ENCODE measurements at regions of chr3 and their contacts with region 1.

Region 1: GRCh38 chr3:66816090-66816761 is 181.9 kb upstream of the KBTBD8 start:
- DNase-seq: peak; percentile 13
- H3K4me3 ChIP-seq: no peak overlapping the region
- H3K27ac ChIP-seq: no peak overlapping the region
- H3K4me1 ChIP-seq: no peaks in the 10 kb centered on the region
- H3K27me3 ChIP-seq: no peaks in the 10 kb centered on the region
- CTCF ChIP-seq: peak; percentile 19 to 57

Region 2: GRCh38 chr3:66638717-66639116 is 177.5 kb before region 1 on chr3:
- CTCF ChIA-PET with region 1: interaction called, 4 read pairs
- dilution Hi-C with region 1: no loop called
- in situ Hi-C with region 1: no loop called
- intact Hi-C with region 1: loop called (anchors 1 kb)
- DNase-seq: peak; percentile 16
- H3K4me3 ChIP-seq: no peak overlapping the region
- H3K27ac ChIP-seq: no peak overlapping the region
- H3K4me1 ChIP-seq: no peaks in the 10 kb centered on the region
- H3K27me3 ChIP-seq: no peaks in the 10 kb centered on the region
- CTCF ChIP-seq: peak in 1 of 2 donors; percentile 45

Region 3: DNA sequence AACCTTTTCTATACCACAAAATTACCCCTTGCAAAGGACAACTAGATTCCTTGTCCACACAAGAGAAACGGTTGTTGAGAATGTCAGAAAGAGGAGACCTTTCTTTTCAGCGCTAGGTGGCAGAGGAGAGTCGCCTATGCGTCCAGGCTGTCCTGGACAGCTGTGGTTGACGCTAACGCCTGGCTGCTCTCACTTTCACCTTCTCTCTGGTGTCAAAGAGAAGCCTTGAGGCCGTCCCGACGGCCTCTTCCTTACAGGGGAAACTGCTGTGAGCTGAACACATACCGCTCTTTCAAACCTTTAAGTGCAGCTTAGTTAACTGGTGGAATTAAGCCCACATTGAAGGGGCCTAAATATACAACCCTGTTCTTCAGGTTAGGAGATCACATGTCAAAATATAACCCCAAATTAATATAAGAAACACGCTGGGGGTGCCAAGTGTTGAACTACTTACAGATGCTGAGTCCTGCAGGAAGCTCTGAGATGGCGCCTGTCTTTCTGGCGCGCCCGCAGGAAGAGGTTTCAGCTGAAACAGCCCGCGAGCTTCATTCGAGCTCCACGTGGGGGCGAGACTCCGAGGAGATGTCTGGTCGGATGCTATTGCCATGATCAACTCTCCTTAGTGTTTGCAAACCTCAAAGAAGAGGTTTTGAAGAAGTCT is 155.8 kb after region 1 on chr3:
- CTCF ChIA-PET with region 1: no interaction called
- dilution Hi-C with region 1: no loop called
- in situ Hi-C with region 1: no loop called
- intact Hi-C with region 1: no loop called
- DNase-seq: peak; percentile 43
- H3K4me3 ChIP-seq: peak overlapping the region; percentile 8 to 19 (median 14)
- H3K27ac ChIP-seq: no peak overlapping the region
- H3K4me1 ChIP-seq: no peaks in the 10 kb centered on the region
- H3K27me3 ChIP-seq: peaks cover 3% of the 10 kb centered on the region
- CTCF ChIP-seq: peak; percentile 83 to 85